ENCODE measurements at regions of chr18 and their contacts with region 1.

Region 1: DNA sequence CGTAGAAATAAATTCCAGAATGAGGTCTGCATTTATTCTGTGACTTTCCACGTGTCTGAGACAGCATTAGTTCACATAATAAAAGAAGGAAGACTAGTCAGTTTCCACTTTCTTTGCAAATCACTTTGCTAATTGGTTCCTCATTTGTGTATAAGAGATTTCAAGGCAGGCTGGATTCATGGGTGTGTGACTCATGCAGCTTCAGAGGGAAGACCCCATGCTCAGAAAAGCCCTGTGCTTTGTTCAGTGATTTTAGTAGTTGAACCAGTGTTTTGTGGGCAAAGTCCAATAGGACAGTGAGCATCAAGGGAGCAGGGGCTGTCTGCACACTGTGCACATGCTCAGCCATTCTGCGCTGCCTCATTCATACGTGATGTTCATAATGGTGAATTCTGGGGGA is 297.8 kb downstream of the DLGAP1 start:
- DNase-seq: peak; percentile 19
- ATAC-seq: peak; percentile 79
- H3K4me3 ChIP-seq: no peak overlapping the region
- H3K27ac ChIP-seq: no peak overlapping the region
- H3K4me1 ChIP-seq: no peaks in the 10 kb centered on the region
- H3K27me3 ChIP-seq: no peaks in the 10 kb centered on the region
- CTCF ChIP-seq: no peak
- EP300 ChIP-seq: no peak
- POLR2A ChIP-seq: no peak
- RAD21 ChIP-seq: no peak

Region 2: DNA sequence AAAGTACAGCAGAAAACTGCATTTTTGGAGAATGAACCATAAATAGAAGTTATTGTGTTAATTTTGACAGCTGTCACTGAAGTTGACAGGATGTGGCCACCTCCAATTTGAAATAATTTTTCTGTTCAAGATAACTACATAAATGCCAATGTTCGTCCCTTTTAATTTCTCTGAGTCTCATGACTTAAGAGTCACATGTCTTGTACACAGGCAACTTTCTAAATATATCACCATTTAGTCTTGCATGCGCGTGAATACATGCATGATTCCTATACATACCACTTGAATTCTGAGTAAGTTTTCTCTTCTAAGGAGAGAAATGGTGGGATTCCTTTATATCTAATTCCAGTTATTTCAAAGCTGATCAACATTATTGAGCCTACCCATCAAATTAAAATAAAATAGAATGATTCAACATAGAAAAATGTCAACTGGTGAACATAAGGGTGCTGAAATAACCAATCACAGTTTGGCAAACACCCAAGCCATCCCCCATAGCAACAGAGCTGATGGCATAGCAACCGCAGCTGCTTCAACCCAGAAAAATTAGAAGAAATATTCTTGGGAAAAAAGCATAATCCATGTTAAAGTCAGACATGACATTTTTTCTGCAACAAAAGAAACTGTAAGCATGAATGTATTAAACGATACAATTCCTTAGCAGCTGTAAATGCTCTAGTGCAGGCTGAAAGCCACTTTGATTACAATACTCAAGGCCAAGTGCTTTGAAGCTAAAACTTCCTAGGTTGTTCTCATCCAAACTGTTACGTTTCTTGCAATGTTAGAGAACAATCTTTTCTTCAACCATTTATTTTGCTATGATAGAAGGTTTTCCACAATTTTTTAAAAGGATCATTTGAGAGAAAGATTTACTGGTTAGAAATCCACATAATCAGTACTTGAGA is 15.1 kb after region 1 on chr18:
- CTCF ChIA-PET with region 1: interaction called, 6 read pairs
- POLR2A ChIA-PET with region 1: interaction called, 4 read pairs
- RAD21 ChIA-PET with region 1: no interaction called
- SMC1A ChIA-PET with region 1: interaction called, 11 read pairs
- in situ Hi-C with region 1: no loop called
- intact Hi-C with region 1: no loop called
- DNase-seq: no peak
- ATAC-seq: no peak
- H3K4me3 ChIP-seq: no peak overlapping the region
- H3K27ac ChIP-seq: no peak overlapping the region
- H3K4me1 ChIP-seq: no peaks in the 10 kb centered on the region
- H3K27me3 ChIP-seq: no peaks in the 10 kb centered on the region
- CTCF ChIP-seq: no peak
- EP300 ChIP-seq: no peak
- POLR2A ChIP-seq: no peak
- RAD21 ChIP-seq: no peak

Measured in GM12878 (cell line).